ENCODE measurements at regions of chr18 and their contacts with region 1.

Region 1: GRCh38 chr18:9334329-9334972 is at the start of gene TWSG1:
- DNase-seq: peak; percentile 91
- H3K4me3 Mint-ChIP-seq: peak within 1 kb of the TSS; percentile 79
- H3K27ac Mint-ChIP-seq: no peak within 1 kb of the TSS
- H3K4me1 Mint-ChIP-seq: peaks cover 13% of the 10 kb centered on the region
- H3K27me3 Mint-ChIP-seq: peaks cover 2% of the 10 kb centered on the region
- total RNA-seq, gene TWSG1: 4.9 to 5.6 TPM

Region 2: GRCh38 chr18:8608795-8609658 is 725.4 kb before region 1 on chr18 and contains the start of gene RAB12:
- CTCF ChIA-PET with region 1: no interaction called
- intact Hi-C with region 1: loop called (anchors 5 kb)
- DNase-seq: peak; percentile 87
- H3K4me3 Mint-ChIP-seq: peak within 1 kb of the TSS; percentile 89
- H3K27ac Mint-ChIP-seq: peak within 1 kb of the TSS; percentile 91
- H3K4me1 Mint-ChIP-seq: peaks cover 47% of the 10 kb centered on the region
- H3K27me3 Mint-ChIP-seq: no peaks in the 10 kb centered on the region
- total RNA-seq, gene RAB12: 11.0 to 11.9 TPM

Region 3: DNA sequence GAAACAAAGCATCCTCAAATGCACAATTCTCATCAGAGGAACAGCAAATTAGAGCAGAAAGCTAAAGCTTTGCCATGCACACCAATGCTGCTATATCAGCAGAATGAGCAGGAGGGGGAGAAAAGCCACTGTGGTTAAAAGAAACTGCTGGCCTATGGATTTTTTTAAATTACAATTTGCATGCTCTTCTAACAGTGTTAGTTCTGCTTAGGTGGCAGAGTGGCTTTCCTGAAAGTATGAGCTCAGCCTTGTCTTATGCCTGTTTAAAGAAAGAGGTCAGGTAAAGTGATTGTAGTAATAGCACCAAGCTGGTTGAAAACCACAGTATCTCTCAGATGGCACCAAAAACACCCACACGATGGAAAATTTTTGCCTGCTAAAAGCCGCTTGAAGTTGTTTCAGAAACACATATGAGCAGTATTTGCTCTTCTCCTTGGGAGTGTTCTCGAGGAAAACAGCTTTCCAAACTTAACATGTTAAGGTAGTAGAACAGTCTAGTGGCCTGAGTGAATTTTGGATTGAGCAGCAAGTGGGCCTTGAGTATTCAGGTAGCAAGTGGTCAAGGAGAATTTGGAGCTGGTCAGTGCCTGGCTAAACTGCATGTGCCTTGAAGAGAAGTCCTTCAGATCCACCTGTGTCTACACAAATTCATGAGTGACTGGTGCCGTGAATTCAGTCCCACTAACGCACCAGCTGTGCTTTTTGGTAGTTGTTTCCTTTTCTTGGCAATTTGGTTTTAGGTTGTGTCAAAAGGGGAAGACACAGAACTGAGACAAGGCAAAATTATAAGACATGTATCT is 251.5 kb before region 1 on chr18:
- CTCF ChIA-PET with region 1: no interaction called
- intact Hi-C with region 1: loop called (anchors 2 kb)
- DNase-seq: peak; percentile 82
- H3K4me3 Mint-ChIP-seq: peak overlapping the region; percentile 67
- H3K27ac Mint-ChIP-seq: peak overlapping the region; percentile 92
- H3K4me1 Mint-ChIP-seq: peaks cover 30% of the 10 kb centered on the region
- H3K27me3 Mint-ChIP-seq: no peaks in the 10 kb centered on the region

Region 4: DNA sequence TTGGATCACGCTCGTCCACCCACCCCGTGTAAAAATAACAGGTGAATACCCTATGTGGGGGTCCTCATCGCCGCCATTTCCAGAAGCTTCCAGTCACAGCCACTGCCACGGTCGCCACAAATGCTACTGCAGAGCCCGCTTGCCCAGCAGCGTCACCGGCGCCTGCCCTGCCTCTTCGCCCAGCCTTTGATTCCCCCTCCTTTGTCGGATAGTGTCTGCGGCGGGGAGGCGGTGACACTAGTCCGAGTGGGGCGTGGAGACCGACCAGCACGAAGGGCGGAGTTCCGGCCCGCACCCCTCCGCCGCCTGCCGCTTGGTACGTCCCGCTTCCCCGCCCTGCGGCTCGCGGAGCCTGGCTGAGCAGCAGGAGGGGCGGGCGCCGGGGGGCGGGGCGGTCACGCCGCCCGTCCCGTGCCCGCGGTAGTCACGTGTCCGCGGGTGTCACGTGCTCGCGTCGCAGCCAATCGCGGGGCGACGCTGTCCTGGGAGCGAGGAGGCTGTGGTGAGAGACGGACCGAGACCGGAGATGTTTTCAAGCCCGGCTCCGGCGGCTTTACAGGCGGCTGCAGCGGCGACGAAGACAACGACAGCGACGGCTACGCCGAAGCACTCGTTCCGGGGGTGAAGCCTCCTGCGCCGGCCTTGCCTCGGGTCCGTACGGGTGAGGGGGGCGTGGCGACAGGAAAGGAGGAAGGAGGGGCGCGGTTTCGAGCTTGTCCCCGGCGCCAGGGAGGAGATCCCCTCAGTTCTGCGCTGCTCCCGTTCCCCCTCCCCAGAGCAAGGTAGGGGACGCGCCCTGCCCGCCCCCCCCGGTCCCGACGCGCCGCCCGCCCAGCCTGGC is 197.9 kb before region 1 on chr18 and contains the start of gene ANKRD12:
- CTCF ChIA-PET with region 1: no interaction called
- intact Hi-C with region 1: loop called (anchors 1 kb)
- DNase-seq: peak; percentile 96
- H3K4me3 Mint-ChIP-seq: peak within 1 kb of the TSS; percentile 96
- H3K27ac Mint-ChIP-seq: peak within 1 kb of the TSS; percentile 97
- H3K4me1 Mint-ChIP-seq: peaks cover 63% of the 10 kb centered on the region
- H3K27me3 Mint-ChIP-seq: no peaks in the 10 kb centered on the region
- total RNA-seq, gene ANKRD12: 37.5 to 40.0 TPM

Region 5: GRCh38 chr18:9516437-9517064 is 182.1 kb after region 1 on chr18:
- CTCF ChIA-PET with region 1: interaction called, 7 read pairs
- intact Hi-C with region 1: loop called (anchors 2 kb)
- DNase-seq: peak; percentile 8
- H3K4me3 Mint-ChIP-seq: no peak overlapping the region
- H3K27ac Mint-ChIP-seq: no peak overlapping the region
- H3K4me1 Mint-ChIP-seq: no peaks in the 10 kb centered on the region
- H3K27me3 Mint-ChIP-seq: no peaks in the 10 kb centered on the region

Region 6: DNA sequence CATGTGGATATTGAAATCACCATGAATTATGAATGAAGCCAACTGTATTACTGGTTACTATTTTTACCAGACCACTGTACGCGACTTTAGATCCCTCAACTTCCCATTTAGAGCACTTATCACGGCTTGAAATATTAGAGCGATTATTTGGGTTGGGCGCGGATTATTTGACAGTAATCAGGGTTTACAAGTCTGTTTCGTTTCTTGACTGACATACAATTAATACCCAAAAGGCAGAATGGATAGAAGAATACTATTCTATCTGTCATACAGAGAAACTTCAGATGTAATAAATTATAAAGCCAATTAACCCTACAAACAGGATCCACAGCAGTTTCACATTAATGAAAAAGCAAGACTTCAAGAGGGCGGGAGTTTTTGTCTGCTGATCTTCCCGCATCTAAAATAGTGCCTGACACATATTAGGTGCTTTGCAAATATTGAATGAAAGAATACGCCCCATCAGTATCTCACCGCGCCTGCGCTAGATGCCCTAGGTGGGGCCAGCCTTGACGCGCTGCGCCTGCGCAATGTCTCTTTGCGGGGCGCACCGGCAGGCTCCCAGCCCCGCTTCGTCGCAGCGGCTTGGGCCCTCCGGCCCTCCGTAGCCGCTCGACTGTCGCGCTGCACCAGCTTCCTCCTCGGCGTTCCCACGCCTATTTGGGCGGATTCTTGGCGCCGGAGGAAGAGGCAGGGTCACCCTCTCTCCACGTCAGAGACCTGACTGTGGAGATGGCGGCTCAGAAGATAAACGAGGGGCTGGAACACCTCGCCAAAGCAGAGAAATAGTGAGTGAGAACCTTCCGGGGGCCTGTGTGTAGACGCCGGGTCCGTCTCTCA is 1191.1 kb after region 1 on chr18 and contains the start of gene NAPG:
- CTCF ChIA-PET with region 1: no interaction called
- intact Hi-C with region 1: loop called (anchors 5 kb)
- DNase-seq: peak; percentile 88
- H3K4me3 Mint-ChIP-seq: peak within 1 kb of the TSS; percentile 95
- H3K27ac Mint-ChIP-seq: peak within 1 kb of the TSS; percentile 89
- H3K4me1 Mint-ChIP-seq: peaks cover 45% of the 10 kb centered on the region
- H3K27me3 Mint-ChIP-seq: no peaks in the 10 kb centered on the region
- total RNA-seq, gene NAPG: 20.2 to 21.0 TPM